Spleen (tissue), 13 donors: ENCODE measurements at regions of chr7 and their contacts with region 1.

Region 1: DNA sequence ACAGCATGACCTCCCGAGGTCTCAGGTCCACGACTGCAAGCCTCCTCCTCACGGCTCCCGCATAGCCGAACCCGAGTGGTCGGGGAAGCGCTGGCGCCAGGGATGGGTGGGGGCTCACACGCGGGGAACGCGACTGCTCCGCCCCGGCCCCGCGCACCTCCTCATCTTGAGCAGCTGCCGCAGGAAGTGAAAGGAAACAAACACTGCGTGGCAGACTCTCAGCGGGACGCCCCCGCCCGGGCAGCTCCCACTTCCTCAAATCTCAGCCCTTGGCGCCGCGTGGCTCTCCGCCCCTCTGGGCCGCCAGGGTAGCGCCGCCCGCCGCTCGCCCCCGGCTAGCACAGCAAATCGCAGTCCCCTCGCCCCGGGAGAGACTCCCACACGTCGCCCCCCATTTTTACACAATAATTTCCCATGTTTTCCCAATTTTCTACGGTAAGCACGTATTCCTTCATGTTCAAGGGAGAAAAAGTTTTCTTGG is at the start of gene TMEM243:
- DNase-seq: peak; percentile 98
- H3K4me3 ChIP-seq: peak within 1 kb of the TSS; percentile 67 to 98 (median 94)
- H3K27ac ChIP-seq: peak within 1 kb of the TSS; percentile 80 to 98 (median 92)
- H3K4me1 ChIP-seq: peaks cover 6 to 59% (median 53%) of the 10 kb centered on the region in 6 donors
- H3K27me3 ChIP-seq: peaks cover 0 to 25% (median 0%) of the 10 kb centered on the region in 7 donors
- CTCF ChIP-seq: peak in 10 of 11 experiments; percentile 16 to 63 (median 41)
- POLR2A ChIP-seq: peak; percentile 37 to 90 (median 84)
- total RNA-seq, gene TMEM243: 45.4 to 144 (median 57.2) TPM

Region 2: DNA sequence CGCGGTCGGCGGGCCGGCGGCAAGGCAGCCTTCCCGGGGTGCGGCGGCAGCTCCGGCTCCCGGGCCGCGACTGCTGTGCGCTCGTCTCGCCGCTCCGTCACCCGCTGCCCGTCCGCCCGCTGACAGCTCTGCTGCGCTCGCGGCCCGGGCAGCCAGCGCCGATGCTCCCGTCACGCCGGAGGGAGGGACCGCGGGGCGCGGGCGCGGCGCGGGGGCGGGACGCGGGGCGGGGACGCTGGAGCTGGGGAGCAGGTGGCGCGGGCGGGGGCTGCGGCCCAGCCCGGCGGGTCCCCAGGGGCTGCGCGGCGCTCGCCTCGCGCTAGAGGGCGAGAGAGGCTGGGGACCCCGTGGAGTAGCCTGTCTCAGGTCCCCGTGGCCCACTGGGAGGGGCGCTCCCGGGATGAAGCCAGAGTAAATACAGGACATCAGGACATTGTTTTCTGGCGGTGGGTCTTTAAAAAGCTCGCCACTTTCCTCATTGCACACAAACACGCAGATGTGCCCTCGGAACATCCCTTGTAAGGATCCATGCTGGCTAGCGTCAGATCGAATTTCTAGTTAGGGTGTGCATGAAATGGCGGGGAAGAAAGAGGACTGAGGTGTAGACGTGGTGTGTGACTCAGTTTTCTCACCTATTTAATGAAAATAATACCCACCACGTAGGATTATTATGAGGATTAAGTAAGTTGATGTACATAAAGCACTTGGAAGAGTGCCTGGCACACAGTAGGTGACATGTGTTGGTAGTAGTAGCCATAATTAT is 159.9 kb before region 1 on chr7 and contains the start of gene ELAPOR2:
- intact Hi-C with region 1: loop called (anchors 10 kb)
- DNase-seq: peak; percentile 94
- H3K4me3 ChIP-seq: peak within 1 kb of the TSS; percentile 44 to 74 (median 58)
- H3K27ac ChIP-seq: peak within 1 kb of the TSS in 7 of 8 donors; percentile 24 to 81 (median 72)
- H3K4me1 ChIP-seq: peaks cover 0 to 20% (median 14%) of the 10 kb centered on the region in 6 donors
- H3K27me3 ChIP-seq: peaks cover 0 to 19% (median 0%) of the 10 kb centered on the region in 7 donors
- CTCF ChIP-seq: peak in 10 of 11 experiments; percentile 7 to 72 (median 50)
- POLR2A ChIP-seq: no peak
- total RNA-seq, gene ELAPOR2: 17.3 to 23.3 (median 18.5) TPM

Region 3: GRCh38 chr7:87148332-87148955 is 71.1 kb before region 1 on chr7:
- intact Hi-C with region 1: loop called (anchors 5 kb)
- DNase-seq: no peak
- H3K4me3 ChIP-seq: no peak overlapping the region
- H3K27ac ChIP-seq: no peak overlapping the region
- H3K4me1 ChIP-seq: peaks cover 0 to 33% (median 12%) of the 10 kb centered on the region in 6 donors
- H3K27me3 ChIP-seq: no peaks in the 10 kb centered on the region
- CTCF ChIP-seq: peak in 8 of 11 experiments; percentile 45 to 64 (median 54)
- POLR2A ChIP-seq: no peak